Right cardiac atrium (tissue), 5 donors: ENCODE measurements at regions of chr17 and their contacts with region 1.

Region 1: DNA sequence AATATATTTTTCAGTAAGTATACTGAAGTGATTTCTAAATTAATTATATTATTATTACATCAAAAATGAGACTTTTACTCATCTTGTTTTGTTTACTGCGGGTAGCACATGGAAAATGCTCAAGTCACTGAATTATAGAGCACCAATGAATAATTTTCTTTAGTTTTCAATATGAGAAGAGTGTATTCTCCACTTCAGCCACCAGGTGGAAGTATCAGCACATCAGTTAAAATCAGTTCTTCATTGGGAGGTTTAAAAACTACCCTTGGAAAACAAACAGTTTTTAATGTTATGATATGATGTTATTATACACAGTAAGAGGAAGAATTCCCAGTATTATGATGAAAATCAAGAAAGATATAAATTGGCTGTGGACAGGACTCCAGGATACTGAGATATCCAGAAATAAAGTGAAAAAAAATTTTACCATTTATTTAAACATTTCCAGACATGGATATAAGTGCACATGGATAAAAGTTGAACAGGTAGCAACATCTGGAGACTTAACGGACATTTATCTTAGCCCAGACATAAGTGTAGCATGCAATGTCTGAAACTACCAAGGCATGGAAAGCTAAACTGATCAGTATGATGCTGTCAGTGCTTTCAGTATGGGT is 467.3 kb downstream of the KCNJ2 start:
- DNase-seq: no peak
- ATAC-seq: no peak
- H3K4me3 ChIP-seq: no peak overlapping the region
- H3K27ac ChIP-seq: no peak overlapping the region
- H3K4me1 ChIP-seq: no peaks in the 10 kb centered on the region
- H3K27me3 ChIP-seq: no peaks in the 10 kb centered on the region

Region 2: GRCh38 chr17:72539981-72540897 is 1903.6 kb after region 1 on chr17:
- intact Hi-C with region 1: loop called in 3 of 4 experiments (anchors 5 kb)
- DNase-seq: peak; percentile 82 to 91 (median 91)
- ATAC-seq: peak; percentile 97 to 98
- H3K4me3 ChIP-seq: no peak overlapping the region
- H3K27ac ChIP-seq: no peak overlapping the region
- H3K4me1 ChIP-seq: peaks cover 2% of the 10 kb centered on the region
- H3K27me3 ChIP-seq: no peaks in the 10 kb centered on the region